IMR-90 (cell line): ENCODE measurements at regions of chr5 and their contacts with region 1.

Region 1: DNA sequence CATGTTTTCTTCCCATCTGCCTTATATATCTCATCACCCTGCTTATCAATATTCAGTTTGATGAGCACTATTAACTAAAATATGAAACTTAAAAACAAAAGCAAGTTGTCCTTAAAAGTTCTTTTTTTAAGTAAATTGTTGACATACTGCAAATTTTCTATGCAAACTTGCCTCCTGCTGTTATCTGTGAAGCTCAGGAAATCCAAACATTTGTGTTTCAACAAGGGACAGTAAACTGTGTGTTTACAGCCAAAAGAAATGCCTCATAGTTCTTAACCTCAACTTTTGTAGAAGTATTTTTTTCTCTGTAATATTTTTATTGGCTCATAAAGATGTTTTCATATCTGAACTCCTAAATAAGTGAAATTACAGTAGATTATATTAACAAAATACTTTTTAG is 7.7 kb upstream of the TTC23L start:
- DNase-seq: no peak
- ATAC-seq: peak; percentile 52
- H3K4me3 ChIP-seq: no peak overlapping the region
- H3K27ac ChIP-seq: no peak overlapping the region
- H3K4me1 ChIP-seq: peaks cover 9% of the 10 kb centered on the region; the same call in 1 of the 2 replicates
- H3K27me3 ChIP-seq: no peaks in the 10 kb centered on the region
- CTCF ChIP-seq: no peak
- POLR2A ChIP-seq: no peak
- RAD21 ChIP-seq: no peak

Region 2: DNA sequence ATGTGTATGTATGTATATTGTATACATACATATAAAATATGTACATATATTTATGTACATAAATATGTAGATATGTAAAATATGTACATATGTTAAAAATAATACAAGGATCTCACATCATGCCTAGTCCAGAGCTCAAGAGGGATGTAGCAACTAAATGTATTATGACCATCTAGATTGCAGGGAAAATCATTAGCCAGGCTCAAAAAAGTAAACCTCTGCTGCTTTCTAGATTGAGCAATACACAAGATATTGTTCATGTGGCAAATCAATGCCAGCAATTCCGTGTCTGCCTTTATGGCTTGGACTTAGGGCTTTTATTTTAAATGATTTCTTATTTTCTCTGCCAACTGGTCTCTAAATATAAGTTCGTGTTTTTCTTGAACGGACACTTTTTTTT is 110.0 kb before region 1 on chr5:
- CTCF ChIA-PET with region 1: no interaction called
- POLR2A ChIA-PET with region 1: no interaction called
- dilution Hi-C with region 1: no loop called
- in situ Hi-C with region 1: no loop called
- intact Hi-C with region 1: no loop called
- DNase-seq: peak; percentile 40
- ATAC-seq: no peak
- H3K4me3 ChIP-seq: no peak overlapping the region
- H3K27ac ChIP-seq: peak overlapping the region; percentile 26; the same call in 1 of the 2 replicates
- H3K4me1 ChIP-seq: peaks cover 23% of the 10 kb centered on the region
- H3K27me3 ChIP-seq: no peaks in the 10 kb centered on the region
- CTCF ChIP-seq: no peak
- POLR2A ChIP-seq: no peak
- RAD21 ChIP-seq: no peak

Region 3: GRCh38 chr5:34843497-34843896 is 12.2 kb after region 1 on chr5:
- CTCF ChIA-PET with region 1: no interaction called
- POLR2A ChIA-PET with region 1: interaction called, 15 read pairs
- dilution Hi-C with region 1: no loop called
- in situ Hi-C with region 1: no loop called
- intact Hi-C with region 1: no loop called
- DNase-seq: peak; percentile 50
- ATAC-seq: no peak; the same call in 1 of the 2 replicates
- H3K4me3 ChIP-seq: no peak overlapping the region
- H3K27ac ChIP-seq: no peak overlapping the region
- H3K4me1 ChIP-seq: peaks cover 3% of the 10 kb centered on the region; the same call in 1 of the 2 replicates
- H3K27me3 ChIP-seq: no peaks in the 10 kb centered on the region
- CTCF ChIP-seq: no peak
- POLR2A ChIP-seq: no peak
- RAD21 ChIP-seq: no peak

Region 4: GRCh38 chr5:34929150-34929719 is 97.9 kb after region 1 on chr5 and contains the start of gene DNAJC21:
- CTCF ChIA-PET with region 1: no interaction called
- POLR2A ChIA-PET with region 1: interaction called, 15 read pairs
- dilution Hi-C with region 1: no loop called
- in situ Hi-C with region 1: no loop called
- intact Hi-C with region 1: no loop called
- DNase-seq: peak; percentile 94
- ATAC-seq: peak; percentile 92
- H3K4me3 ChIP-seq: peak within 1 kb of the TSS; percentile 98
- H3K27ac ChIP-seq: peak within 1 kb of the TSS; percentile 82
- H3K4me1 ChIP-seq: peaks cover 5% of the 10 kb centered on the region; the same call in 1 of the 2 replicates
- H3K27me3 ChIP-seq: no peaks in the 10 kb centered on the region
- CTCF ChIP-seq: no peak
- POLR2A ChIP-seq: no peak
- RAD21 ChIP-seq: no peak
- total RNA-seq, gene DNAJC21: 8.8 and 27.2 TPM in 2 replicates